PC-9 (cell line): ENCODE measurements at regions of chr12 and their contacts with region 1.

Region 1: DNA sequence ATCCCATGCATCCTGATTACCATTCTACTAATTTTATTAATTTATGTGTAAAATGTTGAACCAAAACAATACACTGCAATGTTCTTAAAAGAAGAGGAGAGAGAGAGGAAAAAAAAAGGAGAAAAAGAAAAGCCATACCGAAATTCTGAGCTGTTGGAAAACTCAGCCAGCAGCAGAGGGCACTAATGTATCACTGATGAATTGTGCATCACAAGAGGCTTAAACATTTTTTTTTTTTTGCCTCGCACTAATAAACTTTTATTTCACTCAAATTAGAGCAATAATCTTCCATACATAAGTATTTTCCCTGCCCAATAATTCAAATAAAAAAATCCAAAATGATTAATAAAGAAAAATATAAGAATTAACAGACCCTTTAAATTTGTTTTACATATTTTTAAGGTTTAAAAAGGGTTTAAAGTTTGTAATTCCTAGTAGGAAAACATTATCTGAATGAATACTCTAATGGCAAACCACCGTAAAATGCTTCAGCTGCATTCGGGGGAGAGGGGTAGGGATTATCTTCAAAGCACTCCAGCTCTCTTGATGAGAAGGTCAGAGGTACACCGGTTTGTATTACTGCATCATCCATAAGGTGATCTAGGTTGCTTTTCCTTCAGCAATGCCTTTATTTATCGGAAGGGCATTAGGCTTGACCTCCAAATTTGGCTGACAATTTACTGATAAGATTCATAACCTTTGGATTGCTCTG is 41.9 kb downstream of the ATP23 start:
- DNase-seq: peak; percentile 44 to 48
- H3K4me3 ChIP-seq: no peak overlapping the region
- H3K27ac ChIP-seq: no peak overlapping the region
- H3K4me1 ChIP-seq: no peaks in the 10 kb centered on the region
- H3K27me3 ChIP-seq: no peaks in the 10 kb centered on the region
- CTCF ChIP-seq: peak; percentile 90

Region 2: GRCh38 chr12:58026892-58027891 is 43.9 kb after region 1 on chr12:
- CTCF ChIA-PET with region 1: no interaction called
- POLR2A ChIA-PET with region 1: no interaction called
- intact Hi-C with region 1: loop called (anchors 1 kb)
- DNase-seq: no peak
- H3K4me3 ChIP-seq: no peak overlapping the region
- H3K27ac ChIP-seq: no peak overlapping the region
- H3K4me1 ChIP-seq: no peaks in the 10 kb centered on the region
- H3K27me3 ChIP-seq: no peaks in the 10 kb centered on the region
- CTCF ChIP-seq: no peak

Region 3: GRCh38 chr12:58405363-58405762 is 422.1 kb after region 1 on chr12:
- CTCF ChIA-PET with region 1: interaction called, 12 read pairs
- POLR2A ChIA-PET with region 1: no interaction called
- intact Hi-C with region 1: no loop called
- DNase-seq: no peak
- H3K4me3 ChIP-seq: no peak overlapping the region
- H3K27ac ChIP-seq: no peak overlapping the region
- H3K4me1 ChIP-seq: no peaks in the 10 kb centered on the region
- H3K27me3 ChIP-seq: no peaks in the 10 kb centered on the region
- CTCF ChIP-seq: no peak

Region 4: DNA sequence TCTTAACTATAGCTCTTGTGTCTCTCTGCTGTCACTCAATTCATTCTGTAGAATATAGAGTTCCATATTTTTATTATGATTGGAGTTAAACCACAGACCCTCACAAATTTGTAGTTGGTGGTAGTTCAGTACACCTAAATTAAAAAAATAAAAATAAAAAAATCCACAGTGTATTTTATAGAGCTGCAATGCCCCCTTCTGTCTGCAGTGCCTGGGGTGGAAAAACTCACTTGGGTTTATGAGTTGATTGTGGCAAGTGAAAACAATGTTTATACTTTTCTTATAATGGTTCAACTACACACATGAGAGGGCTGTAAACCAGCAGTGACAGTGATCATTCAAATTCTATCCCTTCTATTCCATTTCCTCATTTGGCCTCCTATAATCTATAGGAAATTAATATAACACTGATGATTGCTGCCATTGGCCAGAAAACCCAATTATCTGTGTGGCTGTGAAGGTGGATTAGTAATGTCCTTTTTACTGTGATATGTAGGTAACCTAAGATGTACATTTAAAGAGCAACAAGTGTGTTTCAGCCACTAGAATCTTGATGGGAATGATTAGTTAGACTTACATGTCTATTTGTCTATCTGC is 1103.9 kb after region 1 on chr12:
- CTCF ChIA-PET with region 1: no interaction called
- POLR2A ChIA-PET with region 1: no interaction called
- intact Hi-C with region 1: loop called (anchors 1 kb)
- DNase-seq: no peak
- H3K4me3 ChIP-seq: no peak overlapping the region
- H3K27ac ChIP-seq: no peak overlapping the region
- H3K4me1 ChIP-seq: no peaks in the 10 kb centered on the region
- H3K27me3 ChIP-seq: no peaks in the 10 kb centered on the region
- CTCF ChIP-seq: peak; percentile 74

Region 5: DNA sequence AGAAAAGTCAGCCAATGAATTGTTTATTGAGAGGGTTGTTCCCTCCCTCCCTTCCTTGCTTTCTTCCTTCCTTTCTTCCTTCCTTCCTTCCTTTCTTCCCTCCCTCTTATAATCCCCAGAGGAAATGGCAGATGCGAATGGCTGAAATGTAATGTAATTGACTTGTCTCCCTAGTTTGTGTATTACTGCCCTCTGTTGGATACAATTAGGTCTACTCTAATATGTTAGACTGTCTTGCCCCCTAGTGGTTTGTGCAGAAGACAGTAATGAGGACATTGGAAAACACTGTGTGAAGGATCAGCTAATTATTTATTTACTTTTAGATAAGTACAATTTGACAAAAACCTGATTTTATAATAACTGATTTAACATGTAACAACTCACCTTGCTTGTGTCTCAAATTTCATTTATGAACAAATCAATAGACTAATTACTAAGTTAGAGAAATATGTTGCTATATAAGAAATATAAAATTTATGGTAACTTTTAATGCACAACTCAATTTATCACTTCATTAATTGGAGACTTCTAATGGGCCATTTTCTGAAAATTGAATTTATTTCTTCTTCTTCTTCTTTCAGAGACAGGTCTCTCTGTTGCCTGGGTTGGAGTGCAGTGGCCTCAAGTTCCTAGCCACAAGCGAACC is 1166.8 kb after region 1 on chr12:
- CTCF ChIA-PET with region 1: no interaction called
- POLR2A ChIA-PET with region 1: no interaction called
- intact Hi-C with region 1: loop called (anchors 1 kb)
- DNase-seq: peak; percentile 6 to 71
- H3K4me3 ChIP-seq: no peak overlapping the region
- H3K27ac ChIP-seq: no peak overlapping the region
- H3K4me1 ChIP-seq: no peaks in the 10 kb centered on the region
- H3K27me3 ChIP-seq: no peaks in the 10 kb centered on the region
- CTCF ChIP-seq: peak; percentile 93